ENCODE measurements at regions of chr17 and their contacts with region 1.

Region 1: GRCh38 chr17:491086-492021 is 138.7 kb upstream of the RPH3AL start:
- DNase-seq: peak; percentile 36 to 59 (median 50)
- H3K4me3 ChIP-seq: peak overlapping the region in 1 of 2 donors; percentile 32
- H3K4me3 Mint-ChIP-seq: peak overlapping the region; percentile 51 to 83 (median 71)
- H3K27ac ChIP-seq: no peak overlapping the region
- H3K27ac Mint-ChIP-seq: peak overlapping the region in 3 of 7 donors; percentile 82 to 97 (median 88)
- H3K4me1 ChIP-seq: peaks cover 10% of the 10 kb centered on the region
- H3K4me1 Mint-ChIP-seq: peaks cover 5 to 29% (median 7%) of the 10 kb centered on the region in 4 donors
- H3K27me3 ChIP-seq: no peaks in the 10 kb centered on the region
- H3K27me3 Mint-ChIP-seq: peaks cover 0 to 2% of the 10 kb centered on the region in 2 donors

Region 2: DNA sequence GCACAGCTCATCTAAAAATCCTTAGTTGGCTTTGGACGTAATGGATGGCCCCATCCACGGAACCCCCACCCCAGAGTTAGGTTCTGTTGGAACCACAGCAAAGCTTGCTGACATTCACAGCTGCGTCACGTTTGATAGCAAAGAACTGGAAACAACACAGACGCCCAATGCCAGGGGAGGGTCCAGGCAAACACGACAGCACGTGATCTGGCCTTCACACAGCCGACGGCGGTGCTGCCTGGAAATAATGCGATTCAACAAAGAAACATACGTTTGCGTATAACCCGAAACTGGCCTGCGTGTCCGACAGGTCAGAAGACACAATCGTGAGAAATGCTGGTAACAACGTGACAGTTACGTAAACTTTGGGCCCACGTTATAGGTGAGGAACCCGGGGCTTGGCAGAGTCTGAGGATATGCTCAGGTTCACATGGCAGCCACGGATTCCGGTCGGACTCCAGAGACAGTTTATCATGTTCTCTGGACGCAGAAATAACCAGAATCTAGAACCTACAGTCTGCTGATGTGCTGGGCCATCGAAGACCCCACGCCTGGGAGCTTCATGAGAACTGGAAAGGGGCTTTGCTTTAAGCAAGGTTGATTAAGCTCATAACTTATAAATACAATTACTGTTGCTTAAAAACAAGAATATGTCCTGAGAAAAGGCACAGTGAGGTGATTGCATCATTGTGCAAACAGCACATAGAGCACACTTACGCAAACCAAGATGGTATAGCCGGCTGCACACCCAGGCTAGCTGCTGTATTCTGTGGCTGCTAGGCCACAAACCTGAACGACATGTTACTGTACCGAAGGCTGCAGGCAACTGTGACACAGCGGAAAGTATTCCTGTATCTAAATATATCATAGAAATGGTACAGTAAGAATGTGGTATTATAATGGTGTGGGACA is 209.1 kb before region 1 on chr17:
- CTCF ChIA-PET with region 1: no interaction called
- POLR2A ChIA-PET with region 1: no interaction called
- intact Hi-C with region 1: no loop called
- DNase-seq: no peak
- H3K4me3 ChIP-seq: no peak overlapping the region
- H3K4me3 Mint-ChIP-seq: no peak overlapping the region
- H3K27ac ChIP-seq: no peak overlapping the region
- H3K27ac Mint-ChIP-seq: peak overlapping the region in 1 of 7 donors; percentile 57
- H3K4me1 ChIP-seq: no peaks in the 10 kb centered on the region
- H3K4me1 Mint-ChIP-seq: no peaks in the 10 kb centered on the region
- H3K27me3 ChIP-seq: no peaks in the 10 kb centered on the region
- H3K27me3 Mint-ChIP-seq: no peaks in the 10 kb centered on the region

Region 3: GRCh38 chr17:416293-417206 is 74.8 kb before region 1 on chr17:
- CTCF ChIA-PET with region 1: interaction called, 15 read pairs
- POLR2A ChIA-PET with region 1: interaction called, 31 read pairs
- intact Hi-C with region 1: no loop called
- DNase-seq: peak; percentile 58 to 71 (median 67)
- H3K4me3 ChIP-seq: peak overlapping the region; percentile 73 to 77
- H3K4me3 Mint-ChIP-seq: peak overlapping the region; percentile 86 to 98 (median 93)
- H3K27ac ChIP-seq: peak overlapping the region; percentile 70
- H3K27ac Mint-ChIP-seq: peak overlapping the region; percentile 92 to 98 (median 97)
- H3K4me1 ChIP-seq: peaks cover 88% of the 10 kb centered on the region
- H3K4me1 Mint-ChIP-seq: peaks cover 60 to 90% (median 78%) of the 10 kb centered on the region in 4 donors
- H3K27me3 ChIP-seq: no peaks in the 10 kb centered on the region
- H3K27me3 Mint-ChIP-seq: no peaks in the 10 kb centered on the region

Measured in CD4-positive, alpha-beta memory T cell (primary cell).